Posterior vena cava (tissue), 2 donors: ENCODE measurements at regions of chr12 and their contacts with region 1.

Region 1: DNA sequence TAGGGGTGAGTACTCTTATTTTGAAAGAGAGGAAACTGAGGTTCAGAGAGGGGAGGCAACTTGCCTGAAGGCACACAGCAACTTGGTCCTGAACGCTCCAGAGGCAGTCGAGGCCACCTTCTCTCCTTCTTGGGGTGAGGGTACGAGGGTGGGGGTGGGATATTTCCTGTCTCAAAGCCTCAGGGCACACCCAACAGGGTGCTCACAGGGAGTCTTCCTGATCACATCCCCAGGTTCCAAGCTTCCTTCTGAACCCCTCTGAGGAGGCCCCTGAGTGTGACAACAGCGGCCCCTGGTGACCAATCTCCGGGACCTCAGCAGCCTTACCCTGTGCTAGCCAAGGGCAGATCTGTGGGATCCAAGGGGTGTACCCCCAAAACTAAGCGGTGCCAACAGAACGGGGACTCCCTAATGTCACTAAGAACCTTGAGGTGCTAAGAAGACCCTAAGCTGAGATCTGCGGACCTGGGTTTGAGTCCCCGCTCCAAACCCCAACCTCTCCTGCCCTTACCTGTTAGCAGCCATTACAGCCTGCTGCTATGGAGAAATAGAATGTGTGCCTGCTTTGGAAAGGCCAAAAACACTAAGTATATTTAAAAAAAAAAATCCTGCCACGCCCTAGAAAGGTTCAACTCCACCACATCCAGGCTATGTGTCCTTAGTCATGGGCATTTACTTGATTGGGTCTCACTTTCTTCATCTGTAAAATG is 57.9 kb downstream of the TRPV4 start:
- DNase-seq: peak; percentile 91

Region 2: GRCh38 chr12:109432841-109433304 is 342.5 kb before region 1 on chr12:
- intact Hi-C with region 1: loop called in 1 of 2 experiments (anchors 10 kb)
- DNase-seq: peak; percentile 93

Region 3: DNA sequence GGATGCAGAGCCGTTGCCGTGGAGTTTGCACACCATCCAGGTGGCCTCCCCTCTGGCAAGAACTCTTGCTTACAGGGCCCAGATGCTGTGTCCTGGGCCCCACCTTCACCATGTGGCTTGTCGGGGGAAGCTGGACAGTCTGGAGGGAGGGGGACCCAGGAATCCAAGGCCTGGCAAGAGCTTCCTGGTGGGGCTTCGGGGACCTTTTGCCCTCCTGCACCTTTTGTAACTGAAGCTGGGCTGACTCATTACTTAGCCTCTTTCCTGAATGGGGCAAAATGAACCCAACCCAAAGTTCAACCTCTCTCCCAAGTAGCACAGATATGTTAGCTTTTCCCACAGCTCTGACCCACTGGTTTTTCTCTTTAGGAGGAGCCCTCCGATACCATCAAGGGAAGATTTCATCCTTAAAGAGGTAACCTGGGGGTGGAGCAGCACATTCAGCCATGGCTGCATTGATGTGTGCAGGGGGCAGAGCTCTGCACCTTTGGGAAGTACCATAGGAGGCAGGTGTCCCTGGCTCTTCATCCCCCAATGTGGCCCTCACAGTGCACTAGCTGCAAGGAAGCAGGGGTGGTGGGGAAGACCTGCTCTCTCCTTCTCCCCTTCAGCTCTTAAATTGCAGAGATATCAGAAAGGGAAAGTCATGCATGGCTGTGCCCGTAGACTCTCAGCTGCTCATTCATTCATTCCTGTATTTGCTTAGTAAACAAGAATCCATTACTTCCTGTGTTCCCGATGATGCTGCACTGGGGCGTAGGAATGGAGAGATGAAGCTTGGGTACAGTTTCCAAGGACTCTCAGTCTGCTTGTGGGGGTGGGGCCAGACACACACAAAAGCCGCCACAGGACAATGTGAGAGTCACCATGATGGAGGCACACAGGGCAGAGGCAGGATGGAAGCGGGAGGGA is 188.7 kb before region 1 on chr12:
- intact Hi-C with region 1: loop called in 1 of 2 experiments (anchors 5 kb)
- DNase-seq: no peak

Region 4: DNA sequence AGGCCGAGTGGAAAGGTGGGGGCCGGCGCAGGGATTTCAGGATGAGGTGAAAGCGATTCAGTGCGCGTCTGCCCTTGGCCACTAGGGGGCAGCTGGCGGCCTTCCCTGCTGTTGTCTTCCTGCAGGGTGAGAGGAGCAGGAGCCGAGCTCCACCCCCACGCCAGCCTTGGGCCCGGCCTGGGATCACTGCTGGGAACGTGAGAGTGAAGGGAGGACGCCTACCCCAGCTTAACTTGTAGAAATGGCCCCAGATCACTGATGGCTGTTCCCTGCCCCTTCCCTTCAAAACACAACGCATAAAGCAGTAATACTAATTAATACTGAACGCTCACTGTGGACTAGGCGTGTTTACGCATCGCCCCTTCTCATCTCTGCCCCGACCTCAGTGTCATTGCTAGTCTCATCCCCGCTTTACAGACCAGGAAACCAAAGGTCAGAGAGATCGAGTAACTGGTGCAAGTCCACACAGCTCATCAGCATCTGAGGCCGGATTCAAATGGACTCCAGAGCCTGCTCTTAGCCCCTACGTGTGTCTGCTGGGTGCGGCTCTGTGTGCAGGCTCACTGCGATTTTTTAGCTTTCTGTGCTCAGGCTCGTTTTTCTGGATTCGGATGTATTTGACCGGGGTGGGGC is 177.4 kb before region 1 on chr12:
- intact Hi-C with region 1: loop called (anchors 5 kb)
- DNase-seq: peak; percentile 95